AG04450 (cell line): ENCODE measurements at regions of chr6 and their contacts with region 1.

Region 1: DNA sequence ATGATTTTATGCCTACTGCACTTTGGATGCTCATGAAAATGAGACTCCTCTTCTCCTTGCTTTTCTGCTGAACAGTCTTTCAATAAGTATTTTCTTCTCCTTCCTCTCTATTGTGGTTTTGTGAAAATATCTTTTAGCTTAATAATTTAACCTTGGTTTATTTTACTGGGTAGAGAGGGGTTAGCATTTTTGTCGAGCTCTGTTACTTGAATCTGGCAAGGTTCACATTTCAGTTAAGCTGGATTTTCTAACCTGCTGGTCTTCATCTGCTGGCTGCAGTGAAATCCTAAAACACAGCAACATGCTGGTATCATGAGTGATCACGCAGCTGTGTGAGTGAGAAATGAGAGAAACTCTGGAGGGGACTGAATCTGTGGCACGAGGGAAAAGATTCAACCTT is 222.7 kb upstream of the NOX3 start:
- DNase-seq: peak; percentile 46
- H3K4me3 ChIP-seq: no peak overlapping the region
- H3K27ac ChIP-seq: no peak overlapping the region
- H3K27me3 ChIP-seq: no peaks in the 10 kb centered on the region
- CTCF ChIP-seq: no peak

Region 2: DNA sequence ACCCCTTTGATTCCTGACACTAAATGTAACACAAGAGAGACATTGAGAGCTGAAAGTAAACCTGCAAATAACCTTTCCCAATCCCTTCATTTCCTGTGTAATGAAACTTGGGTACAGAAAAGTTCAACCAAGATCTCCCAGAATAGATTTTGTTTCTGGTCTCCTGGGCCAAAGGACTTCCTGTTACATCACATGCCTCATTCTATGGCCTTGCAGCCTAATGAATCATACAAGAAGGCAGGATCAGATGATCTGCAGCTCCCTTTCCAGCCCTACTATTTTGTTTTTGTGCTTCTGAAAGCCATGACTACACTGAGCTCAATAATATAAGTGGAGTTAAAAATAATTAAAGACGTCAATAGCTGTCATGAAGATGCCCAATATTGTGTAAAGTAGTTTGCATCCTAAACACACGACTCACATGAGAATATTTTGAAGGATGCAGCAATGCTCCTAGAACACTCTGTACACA is 149.3 kb before region 1 on chr6:
- CTCF ChIA-PET with region 1: no interaction called
- POLR2A ChIA-PET with region 1: no interaction called
- DNase-seq: peak; percentile 53
- H3K4me3 ChIP-seq: no peak overlapping the region
- H3K27ac ChIP-seq: peak overlapping the region; percentile 41
- H3K27me3 ChIP-seq: no peaks in the 10 kb centered on the region
- CTCF ChIP-seq: no peak

Region 3: GRCh38 chr6:156028335-156029131 is 350.2 kb after region 1 on chr6:
- CTCF ChIA-PET with region 1: interaction called, 10 read pairs
- POLR2A ChIA-PET with region 1: no interaction called
- DNase-seq: no peak
- H3K4me3 ChIP-seq: no peak overlapping the region
- H3K27ac ChIP-seq: no peak overlapping the region
- H3K27me3 ChIP-seq: no peaks in the 10 kb centered on the region
- CTCF ChIP-seq: no peak